ENCODE measurements at regions of chr1 and their contacts with region 1.

Region 1: GRCh38 chr1:115771847-115772457 is 3.4 kb upstream of the CASQ2 start:
- DNase-seq: peak; percentile 54
- ATAC-seq: peak; percentile 96
- H3K4me3 ChIP-seq: peak overlapping the region in 1 of 2 experiments; percentile 24; a peak in 1 of 4 replicates
- H3K27ac ChIP-seq: no peak overlapping the region
- H3K4me1 ChIP-seq: no peaks in the 10 kb centered on the region
- H3K27me3 ChIP-seq: peaks cover 3% of the 10 kb centered on the region; the same call in 1 of the 2 replicates
- CTCF ChIP-seq: peak; percentile 73

Region 2: DNA sequence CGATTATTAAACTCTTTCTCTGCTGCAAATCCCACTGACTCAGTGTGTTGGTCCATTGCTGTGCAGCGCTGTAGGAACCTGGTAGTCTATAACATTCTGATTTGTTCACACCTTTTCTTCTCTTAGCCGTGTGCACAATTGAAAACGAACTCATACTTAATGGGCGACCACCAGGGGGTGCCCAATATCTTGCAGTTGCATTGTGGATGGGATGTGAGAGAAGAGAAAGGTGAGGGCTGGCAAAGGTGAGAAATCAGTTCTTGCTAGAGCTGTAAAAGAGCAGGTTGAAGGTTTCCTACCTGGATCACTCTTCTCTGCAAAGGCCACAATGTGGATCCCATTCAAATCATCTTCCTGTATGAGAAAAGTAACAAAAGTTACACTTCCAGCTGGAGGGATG is 54.4 kb before region 1 on chr1:
- CTCF ChIA-PET with region 1: interaction called, 3 read pairs
- POLR2A ChIA-PET with region 1: no interaction called
- in situ Hi-C with region 1: no loop called
- intact Hi-C with region 1: loop called (anchors 2 kb)
- DNase-seq: no peak
- ATAC-seq: no peak
- H3K4me3 ChIP-seq: no peak overlapping the region
- H3K27ac ChIP-seq: no peak overlapping the region
- H3K4me1 ChIP-seq: no peaks in the 10 kb centered on the region
- H3K27me3 ChIP-seq: no peaks in the 10 kb centered on the region
- CTCF ChIP-seq: peak; percentile 40